Sigmoid colon (tissue), 7 donors: ENCODE measurements at regions of chr7 and their contacts with region 1.

Region 1: DNA sequence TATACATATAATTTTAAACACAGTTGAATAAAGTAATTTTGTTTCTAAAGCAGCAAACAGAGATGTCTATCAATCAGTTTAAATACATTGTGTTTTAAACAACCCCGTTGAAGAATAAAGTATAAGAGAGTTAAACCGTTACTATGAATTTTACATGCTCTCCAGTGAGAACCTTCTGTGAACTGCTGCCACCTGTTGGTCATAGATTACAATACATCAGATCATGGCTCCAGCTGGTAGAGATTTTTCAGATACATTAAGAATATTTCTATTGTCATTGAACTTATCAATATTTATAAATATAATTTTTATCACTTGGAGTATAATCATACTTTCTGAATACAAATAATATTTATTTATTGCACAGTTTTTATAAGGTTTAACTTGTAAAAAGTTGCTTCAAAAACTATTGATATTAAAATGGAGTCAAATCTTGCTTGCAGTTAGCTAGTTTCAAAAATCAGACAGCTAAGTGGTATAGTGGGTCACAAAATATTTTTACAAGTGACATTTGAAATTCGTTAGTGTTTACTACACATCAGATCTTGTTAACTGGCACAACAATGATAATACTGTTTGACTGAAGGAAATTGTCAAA is 561.2 kb upstream of the PHF14 start:
- DNase-seq: no peak
- H3K4me3 ChIP-seq: no peak overlapping the region
- H3K27ac ChIP-seq: no peak overlapping the region
- H3K4me1 ChIP-seq: no peaks in the 10 kb centered on the region
- H3K27me3 ChIP-seq: no peaks in the 10 kb centered on the region
- CTCF ChIP-seq: peak; percentile 15 to 65 (median 34)
- EP300 ChIP-seq: no peak
- POLR2A ChIP-seq: no peak

Region 2: GRCh38 chr7:8418629-8419245 is 1993.8 kb before region 1 on chr7:
- intact Hi-C with region 1: loop called (anchors 2 kb)
- DNase-seq: no peak
- H3K4me3 ChIP-seq: no peak overlapping the region
- H3K27ac ChIP-seq: no peak overlapping the region
- H3K4me1 ChIP-seq: no peaks in the 10 kb centered on the region
- H3K27me3 ChIP-seq: no peaks in the 10 kb centered on the region
- CTCF ChIP-seq: peak in 3 of 4 experiments; percentile 38 to 73 (median 48)
- EP300 ChIP-seq: no peak
- POLR2A ChIP-seq: no peak